Heart right ventricle (tissue), 16 donors: ENCODE measurements at regions of chr15 and their contacts with region 1.

Region 1: DNA sequence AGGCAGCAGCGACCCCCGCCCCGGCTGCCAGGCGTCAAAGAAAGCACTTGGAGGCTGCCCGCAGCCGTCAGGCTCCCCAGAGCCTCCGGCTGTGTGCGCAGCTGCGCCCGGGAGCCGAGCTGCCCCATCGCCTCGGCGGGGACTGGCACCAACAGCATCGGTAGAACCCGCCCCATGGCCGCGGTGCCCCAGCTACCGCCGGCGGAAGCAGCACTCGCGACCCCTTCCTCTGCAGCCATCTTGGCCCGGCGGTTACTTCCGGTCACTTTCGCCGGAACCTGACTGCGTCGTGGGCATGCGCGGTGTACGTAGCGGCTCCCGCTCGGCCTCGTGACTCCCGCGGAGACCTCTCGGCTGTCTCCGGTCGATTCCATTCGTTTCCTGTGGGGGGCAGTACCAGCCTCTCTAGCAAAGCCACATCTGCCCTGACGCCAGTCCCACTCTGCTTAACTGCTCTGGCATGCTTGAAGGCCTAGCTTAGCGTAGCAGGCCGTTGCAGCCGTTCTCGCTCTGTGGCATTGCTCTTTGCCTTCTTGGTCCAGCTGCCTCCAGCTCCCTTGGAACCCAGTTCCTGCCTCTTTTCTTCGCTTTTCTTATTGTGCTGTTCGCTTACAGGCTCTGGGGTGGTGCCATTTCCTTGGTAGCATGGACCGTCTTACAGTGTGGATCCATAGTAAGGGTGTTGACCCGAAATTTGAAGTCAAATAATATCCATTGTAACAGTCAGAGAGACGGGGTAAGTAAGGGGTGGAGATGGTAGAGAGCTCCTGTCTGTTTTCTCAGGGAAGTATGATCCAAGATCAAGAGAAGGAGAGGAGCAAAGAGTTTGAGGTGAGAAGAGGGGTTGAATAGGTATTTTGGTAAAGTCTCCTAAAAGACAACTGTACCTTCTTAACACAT is at the start of gene SPG11:
- DNase-seq: peak; percentile 98
- ATAC-seq: peak; percentile 97 to 99 (median 98)
- H3K4me3 ChIP-seq: peak within 1 kb of the TSS; percentile 80 to 100 (median 88)
- H3K27ac ChIP-seq: peak within 1 kb of the TSS; percentile 76 to 100 (median 97)
- H3K4me1 ChIP-seq: peaks cover 0 to 48% (median 26%) of the 10 kb centered on the region in 9 donors
- H3K27me3 ChIP-seq: no peaks in the 10 kb centered on the region
- CTCF ChIP-seq: peak; percentile 87 to 98 (median 97)
- total RNA-seq, gene SPG11: 43.6 to 63.4 (median 52.7) TPM

Region 2: GRCh38 chr15:44195151-44195740 is 468.4 kb before region 1 on chr15 and contains the start of gene FRMD5:
- intact Hi-C with region 1: no loop called
- DNase-seq: peak; percentile 81 to 86
- ATAC-seq: peak; percentile 96 to 99 (median 98)
- H3K4me3 ChIP-seq: peak within 1 kb of the TSS; percentile 36 to 66 (median 62)
- H3K27ac ChIP-seq: peak within 1 kb of the TSS in 3 of 10 donors; percentile 20 to 59 (median 52)
- H3K4me1 ChIP-seq: peaks cover 0 to 27% (median 20%) of the 10 kb centered on the region in 9 donors
- H3K27me3 ChIP-seq: peaks cover 0 to 95% (median 56%) of the 10 kb centered on the region in 7 donors
- CTCF ChIP-seq: peak in 4 of 9 donors; percentile 24 to 46 (median 39)
- total RNA-seq, gene FRMD5: 27.4 to 86.3 (median 58.2) TPM

Region 3: DNA sequence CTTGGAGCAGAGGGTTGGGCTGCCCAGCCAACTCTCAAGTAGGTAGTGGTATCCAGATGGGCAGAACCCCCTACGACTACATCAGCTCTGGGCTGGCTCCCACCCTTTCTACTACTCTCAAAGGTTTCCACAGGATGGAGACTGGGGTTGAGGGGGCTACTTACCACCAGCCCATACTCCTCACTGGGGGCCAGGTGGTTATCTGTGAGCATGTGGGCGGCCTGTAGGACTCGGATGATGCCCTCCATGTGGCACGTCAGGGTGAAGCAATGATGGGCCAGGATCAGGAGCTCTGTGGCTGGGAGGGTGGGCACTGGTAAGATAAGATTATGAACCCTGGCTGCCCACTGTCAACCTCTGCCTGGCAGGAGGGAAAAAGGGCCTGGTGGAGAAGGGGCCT is 93.3 kb before region 1 on chr15:
- intact Hi-C with region 1: no loop called
- DNase-seq: no peak
- ATAC-seq: peak in 3 of 8 donors; percentile 4 to 31 (median 21)
- H3K4me3 ChIP-seq: no peak overlapping the region
- H3K27ac ChIP-seq: no peak overlapping the region
- H3K4me1 ChIP-seq: peaks cover 0 to 7% (median 0%) of the 10 kb centered on the region in 9 donors
- H3K27me3 ChIP-seq: no peaks in the 10 kb centered on the region
- CTCF ChIP-seq: no peak

Region 4: DNA sequence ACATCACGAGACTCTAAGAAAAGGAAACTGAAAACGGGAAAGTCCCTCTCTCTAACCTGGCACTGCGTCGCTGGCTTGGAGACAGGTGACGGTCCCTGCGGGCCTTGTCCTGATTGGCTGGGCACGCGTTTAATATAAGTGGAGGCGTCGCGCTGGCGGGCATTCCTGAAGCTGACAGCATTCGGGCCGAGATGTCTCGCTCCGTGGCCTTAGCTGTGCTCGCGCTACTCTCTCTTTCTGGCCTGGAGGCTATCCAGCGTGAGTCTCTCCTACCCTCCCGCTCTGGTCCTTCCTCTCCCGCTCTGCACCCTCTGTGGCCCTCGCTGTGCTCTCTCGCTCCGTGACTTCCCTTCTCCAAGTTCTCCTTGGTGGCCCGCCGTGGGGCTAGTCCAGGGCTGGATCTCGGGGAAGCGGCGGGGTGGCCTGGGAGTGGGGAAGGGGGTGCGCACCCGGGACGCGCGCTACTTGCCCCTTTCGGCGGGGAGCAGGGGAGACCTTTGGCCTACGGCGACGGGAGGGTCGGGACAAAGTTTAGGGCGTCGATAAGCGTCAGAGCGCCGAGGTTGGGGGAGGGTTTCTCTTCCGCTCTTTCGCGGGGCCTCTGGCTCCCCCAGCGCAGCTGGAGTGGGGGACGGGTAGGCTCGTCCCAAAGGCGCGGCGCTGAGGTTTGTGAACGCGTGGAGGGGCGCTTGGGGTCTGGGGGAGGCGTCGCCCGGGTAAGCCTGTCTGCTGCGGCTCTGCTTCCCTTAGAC is 47.9 kb after region 1 on chr15 and contains the start of gene B2M:
- intact Hi-C with region 1: loop called in 6 of 10 experiments (anchors 1 to 5 kb)
- DNase-seq: peak; percentile 95
- ATAC-seq: peak; percentile 94 to 98 (median 96)
- H3K4me3 ChIP-seq: peak within 1 kb of the TSS; percentile 80 to 99 (median 91)
- H3K27ac ChIP-seq: peak within 1 kb of the TSS; percentile 95 to 100 (median 99)
- H3K4me1 ChIP-seq: peaks cover 5 to 49% (median 34%) of the 10 kb centered on the region in 9 donors
- H3K27me3 ChIP-seq: no peaks in the 10 kb centered on the region
- CTCF ChIP-seq: peak in 1 of 9 donors; percentile 0
- total RNA-seq, gene B2M: 782 to 5,382 (median 1,085) TPM

Region 5: GRCh38 chr15:44728576-44729407 is 65.1 kb after region 1 on chr15:
- intact Hi-C with region 1: loop called in 4 of 10 experiments (anchors 2 kb)
- DNase-seq: peak; percentile 92 to 98
- ATAC-seq: peak; percentile 94 to 99 (median 96)
- H3K4me3 ChIP-seq: peak overlapping the region; percentile 66 to 87 (median 74)
- H3K27ac ChIP-seq: peak overlapping the region; percentile 95 to 99 (median 98)
- H3K4me1 ChIP-seq: peaks cover 3 to 75% (median 43%) of the 10 kb centered on the region in 9 donors
- H3K27me3 ChIP-seq: no peaks in the 10 kb centered on the region
- CTCF ChIP-seq: peak in 1 of 9 donors; percentile 12

Region 6: GRCh38 chr15:44738340-44738984 is 74.8 kb after region 1 on chr15:
- intact Hi-C with region 1: loop called (anchors 1 to 5 kb)
- DNase-seq: no peak
- ATAC-seq: peak in 6 of 8 donors; percentile 27 to 59 (median 40)
- H3K4me3 ChIP-seq: no peak overlapping the region
- H3K27ac ChIP-seq: peak overlapping the region in 1 of 10 donors; percentile 12
- H3K4me1 ChIP-seq: peaks cover 0 to 43% (median 15%) of the 10 kb centered on the region in 9 donors
- H3K27me3 ChIP-seq: no peaks in the 10 kb centered on the region
- CTCF ChIP-seq: peak; percentile 49 to 87 (median 79)